Activated CD8-positive, alpha-beta memory T cell treated with anti-CD3 and anti-CD28 coated beads, Interleukin-2, amount 10 ng/mL, durations not matched to agents 7 days and 5 days (primary cell): ENCODE measurements at regions of chr16 and their contacts with region 1.

Region 1: DNA sequence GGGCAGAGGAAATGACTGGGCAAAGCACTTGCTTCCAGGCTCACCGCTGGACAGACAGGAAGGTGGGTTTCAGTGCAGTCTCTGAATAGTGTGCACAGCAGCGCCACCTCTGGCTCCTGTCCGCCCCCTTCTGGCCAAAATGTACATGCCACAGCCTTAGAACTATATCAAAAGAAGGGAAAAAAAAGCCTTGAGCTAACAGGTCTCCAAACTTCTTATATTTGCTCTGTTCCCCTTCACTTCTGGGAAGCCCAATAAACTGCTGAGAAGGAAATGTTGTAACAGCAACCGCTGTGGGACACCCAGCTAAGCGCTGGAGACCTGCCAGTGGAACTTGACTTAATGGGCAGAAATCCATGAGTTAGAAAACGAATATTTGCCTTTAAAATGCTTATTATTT is 17.5 kb downstream of the COG7 start:
- DNase-seq: peak; percentile 78
- ATAC-seq: peak; percentile 94
- H3K4me3 Mint-ChIP-seq: no peak overlapping the region
- H3K27ac Mint-ChIP-seq: no peak overlapping the region
- H3K4me1 Mint-ChIP-seq: peaks cover 4% of the 10 kb centered on the region
- H3K27me3 Mint-ChIP-seq: no peaks in the 10 kb centered on the region

Region 2: DNA sequence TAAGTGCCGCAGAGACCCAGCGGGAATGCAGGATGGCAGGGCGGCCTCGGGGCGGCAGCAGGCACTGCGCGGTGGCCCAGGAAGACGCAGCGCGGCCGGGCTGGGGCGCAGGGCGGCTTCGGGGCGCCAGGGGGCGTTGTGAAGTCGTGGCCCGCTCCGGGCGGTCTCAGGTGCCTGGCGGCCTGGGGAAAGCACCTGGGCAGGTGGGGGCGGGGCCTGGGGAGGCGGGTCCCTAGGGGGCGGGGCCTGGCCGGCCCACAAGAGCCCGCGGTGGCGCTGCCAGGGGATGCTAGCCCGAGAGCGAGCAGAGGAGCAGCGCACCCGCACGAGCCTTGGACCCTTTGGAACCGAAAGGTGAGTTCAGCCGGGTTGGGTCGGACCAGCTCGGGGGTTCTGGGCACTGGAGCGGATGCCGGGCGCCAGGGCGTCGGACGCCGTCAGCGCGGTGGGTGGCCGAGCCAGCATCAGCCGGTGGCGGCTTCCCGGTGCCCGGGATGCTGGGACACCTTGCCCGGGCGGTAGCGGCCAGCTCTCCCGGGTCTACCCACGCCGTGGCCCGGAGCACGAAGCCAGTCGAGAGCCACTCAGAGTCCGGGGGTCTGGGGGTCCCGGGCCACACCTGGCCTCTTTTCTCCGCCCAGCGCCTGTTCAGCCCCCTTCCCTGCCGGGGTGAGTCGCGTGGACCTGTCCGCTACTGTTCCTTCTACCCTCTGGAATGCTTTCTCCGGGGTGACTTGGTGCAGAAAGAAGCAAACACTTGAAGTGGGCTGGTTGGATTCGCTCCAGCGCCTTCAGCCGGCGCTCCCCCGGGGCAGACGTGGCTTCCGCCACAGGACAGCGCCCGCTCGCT is 252.8 kb before region 1 on chr16 and contains the start of gene SCNN1G:
- CTCF ChIA-PET with region 1: interaction called, 81 read pairs
- DNase-seq: peak; percentile 78
- ATAC-seq: peak; percentile 99
- H3K4me3 Mint-ChIP-seq: peak within 1 kb of the TSS; percentile 44
- H3K27ac Mint-ChIP-seq: no peak within 1 kb of the TSS
- H3K4me1 Mint-ChIP-seq: peaks cover 4% of the 10 kb centered on the region
- H3K27me3 Mint-ChIP-seq: peaks cover 55% of the 10 kb centered on the region
- total RNA-seq, gene SCNN1G: not detected

Region 3: GRCh38 chr16:23452572-23453337 is 17.3 kb after region 1 on chr16 and contains the start of gene COG7:
- CTCF ChIA-PET with region 1: interaction called, 16 read pairs
- DNase-seq: peak; percentile 90
- ATAC-seq: peak; percentile 94
- H3K4me3 Mint-ChIP-seq: peak within 1 kb of the TSS; percentile 93
- H3K27ac Mint-ChIP-seq: peak within 1 kb of the TSS; percentile 84
- H3K4me1 Mint-ChIP-seq: peaks cover 18% of the 10 kb centered on the region
- H3K27me3 Mint-ChIP-seq: no peaks in the 10 kb centered on the region
- total RNA-seq, gene COG7: 17.5 to 25.1 TPM

Region 4: GRCh38 chr16:23556881-23557778 is 121.6 kb after region 1 on chr16 and contains the starts of genes EARS2 and UBFD1:
- CTCF ChIA-PET with region 1: interaction called, 14 read pairs
- DNase-seq: peak; percentile 98
- ATAC-seq: peak; percentile 93
- H3K4me3 Mint-ChIP-seq: peak within 1 kb of the TSS; percentile 92
- H3K27ac Mint-ChIP-seq: peak within 1 kb of the TSS; percentile 84
- H3K4me1 Mint-ChIP-seq: peaks cover 44% of the 10 kb centered on the region
- H3K27me3 Mint-ChIP-seq: no peaks in the 10 kb centered on the region
- total RNA-seq, gene EARS2: 14.3 to 15.9 TPM
- total RNA-seq, gene UBFD1: 46.1 to 64.7 TPM

Region 5: DNA sequence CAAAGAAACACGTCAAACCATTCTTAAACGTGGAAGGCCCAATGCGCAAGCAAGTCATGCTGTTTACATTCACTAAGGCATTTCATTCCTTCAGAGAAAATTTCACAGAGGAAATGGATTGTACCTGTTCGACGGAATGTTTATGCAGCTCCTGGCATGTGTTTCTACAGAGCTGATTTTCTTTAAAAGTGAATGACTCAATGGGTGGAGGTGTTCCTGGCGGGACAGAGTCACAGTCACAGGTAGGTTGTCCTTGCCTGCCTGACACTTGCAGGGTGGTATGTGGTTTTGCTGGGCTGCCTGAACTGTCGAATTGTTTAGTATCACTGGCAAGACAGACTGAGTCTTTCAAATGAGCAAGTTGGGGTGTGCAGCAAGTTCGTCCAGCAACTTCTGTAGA is 194.0 kb after region 1 on chr16:
- CTCF ChIA-PET with region 1: no interaction called
- DNase-seq: no peak
- ATAC-seq: no peak
- H3K4me3 Mint-ChIP-seq: no peak overlapping the region
- H3K27ac Mint-ChIP-seq: no peak overlapping the region
- H3K4me1 Mint-ChIP-seq: peaks cover 21% of the 10 kb centered on the region
- H3K27me3 Mint-ChIP-seq: no peaks in the 10 kb centered on the region